ENCODE measurements at regions of chr5 and their contacts with region 1.

Region 1: GRCh38 chr5:5886812-5887486 is 464.5 kb downstream of the ICE1 start:
- DNase-seq: peak; percentile 14 to 63
- ATAC-seq: peak; percentile 89 to 98
- H3K4me3 ChIP-seq: peak overlapping the region; percentile 34; the same call in 2 of the 3 replicates
- H3K27ac ChIP-seq: peak overlapping the region in 1 of 2 experiments; percentile 39; a peak in 1 of 6 replicates
- H3K4me1 ChIP-seq: peaks cover 5% of the 10 kb centered on the region; the same call in 1 of the 3 replicates
- CTCF ChIP-seq: peak; percentile 77
- EP300 ChIP-seq: no peak
- POLR2A ChIP-seq: no peak
- RAD21 ChIP-seq: peak; percentile 64 to 86

Region 2: DNA sequence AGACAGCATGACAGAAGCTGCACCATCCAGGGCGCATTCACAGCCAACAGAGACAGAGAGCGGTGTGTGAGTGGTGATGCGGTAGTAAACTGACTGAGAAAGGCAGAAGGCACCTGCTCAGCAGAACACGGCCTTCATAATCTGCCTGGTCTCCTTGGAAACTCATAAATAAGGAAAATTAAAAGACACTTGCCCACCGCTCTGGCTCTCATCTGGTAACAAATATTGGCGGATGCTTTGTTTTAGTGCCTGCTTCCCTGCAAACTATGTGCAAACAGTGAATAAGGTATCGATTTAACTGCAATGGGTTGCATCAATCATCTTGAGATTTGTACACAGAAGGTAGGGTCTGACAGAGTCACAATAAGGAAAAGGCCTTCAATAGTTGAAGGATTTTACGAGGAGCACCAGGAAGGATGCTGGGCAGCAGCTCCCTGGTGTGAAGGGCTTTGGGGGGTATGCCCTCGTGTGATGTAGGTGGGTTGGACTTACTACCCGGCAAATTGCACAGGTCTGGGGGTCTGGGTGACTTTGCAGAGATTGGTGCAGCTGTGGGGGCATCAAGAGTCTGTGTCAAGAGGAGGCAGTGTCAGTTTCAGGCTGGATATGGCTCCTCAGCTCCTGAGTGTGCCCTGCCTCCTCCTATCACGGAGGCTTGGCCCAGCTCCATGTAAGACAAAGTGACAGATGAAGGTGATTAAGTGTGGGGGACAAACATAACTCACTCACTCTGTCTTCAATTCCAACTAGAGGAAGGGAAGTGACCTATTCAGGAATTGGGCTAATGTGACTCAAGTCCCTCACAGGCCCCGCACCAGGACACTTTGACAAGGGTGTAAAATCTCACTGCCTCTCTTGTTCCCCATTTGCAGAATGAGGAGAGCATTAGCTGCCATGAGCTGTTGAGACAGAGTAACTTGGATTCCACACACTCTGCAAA is 297.8 kb before region 1 on chr5:
- CTCF ChIA-PET with region 1: no interaction called
- POLR2A ChIA-PET with region 1: no interaction called
- DNase-seq: no peak
- ATAC-seq: no peak
- H3K4me3 ChIP-seq: no peak overlapping the region
- H3K27ac ChIP-seq: no peak overlapping the region
- H3K4me1 ChIP-seq: no peaks in the 10 kb centered on the region
- CTCF ChIP-seq: no peak
- EP300 ChIP-seq: no peak
- POLR2A ChIP-seq: no peak
- RAD21 ChIP-seq: no peak

Region 3: GRCh38 chr5:5902678-5903646 is 16.0 kb after region 1 on chr5:
- CTCF ChIA-PET with region 1: interaction called, 17 read pairs
- POLR2A ChIA-PET with region 1: no interaction called
- DNase-seq: no peak
- ATAC-seq: no peak
- H3K4me3 ChIP-seq: no peak overlapping the region
- H3K27ac ChIP-seq: no peak overlapping the region
- H3K4me1 ChIP-seq: no peaks in the 10 kb centered on the region
- CTCF ChIP-seq: no peak
- EP300 ChIP-seq: no peak
- POLR2A ChIP-seq: no peak
- RAD21 ChIP-seq: no peak

Measured in A549 (cell line).